ENCODE measurements at regions of chr11 and their contacts with region 1.

Region 1: DNA sequence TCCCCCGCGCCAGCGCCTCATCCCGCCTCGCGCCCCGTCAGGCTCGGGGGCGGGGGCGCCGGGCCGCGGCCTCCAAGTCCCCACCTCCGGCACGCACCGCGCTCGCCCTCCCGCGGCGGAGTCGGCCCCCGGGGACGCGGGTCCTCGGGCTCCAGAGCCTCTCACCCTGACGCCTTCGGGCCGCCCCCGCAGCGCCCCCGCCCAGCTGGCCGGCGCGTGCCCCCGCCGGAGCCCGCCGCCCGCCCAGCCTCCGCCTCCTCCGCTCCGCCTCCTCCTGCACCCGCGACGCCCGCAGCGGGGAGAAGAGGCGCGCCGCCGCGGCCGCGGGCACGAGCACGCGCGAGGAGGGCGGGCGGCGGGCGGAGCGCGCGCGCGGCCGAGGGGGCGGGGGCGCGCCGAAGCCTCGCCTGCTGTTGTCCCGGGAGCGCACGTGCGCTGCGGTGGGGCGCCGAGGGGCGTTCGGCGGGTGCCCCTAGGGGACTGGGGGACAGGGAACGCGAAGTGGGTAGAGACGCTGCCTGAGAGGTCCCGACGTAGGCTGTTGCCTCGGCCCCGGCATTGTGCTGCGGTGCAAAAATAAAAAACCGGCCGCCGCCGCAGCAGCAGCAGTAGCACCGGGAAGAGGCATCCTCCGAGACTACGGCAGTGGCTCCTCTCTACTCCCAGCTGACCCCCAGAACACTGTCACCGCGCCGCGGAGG is 87.4 kb upstream of the ARHGAP32 start:
- DNase-seq: peak; percentile 73
- H3K4me3 Mint-ChIP-seq: peak overlapping the region; percentile 80
- H3K27ac Mint-ChIP-seq: peak overlapping the region; percentile 86
- H3K4me1 Mint-ChIP-seq: peaks cover 38% of the 10 kb centered on the region
- H3K27me3 Mint-ChIP-seq: peaks cover 41% of the 10 kb centered on the region

Region 2: DNA sequence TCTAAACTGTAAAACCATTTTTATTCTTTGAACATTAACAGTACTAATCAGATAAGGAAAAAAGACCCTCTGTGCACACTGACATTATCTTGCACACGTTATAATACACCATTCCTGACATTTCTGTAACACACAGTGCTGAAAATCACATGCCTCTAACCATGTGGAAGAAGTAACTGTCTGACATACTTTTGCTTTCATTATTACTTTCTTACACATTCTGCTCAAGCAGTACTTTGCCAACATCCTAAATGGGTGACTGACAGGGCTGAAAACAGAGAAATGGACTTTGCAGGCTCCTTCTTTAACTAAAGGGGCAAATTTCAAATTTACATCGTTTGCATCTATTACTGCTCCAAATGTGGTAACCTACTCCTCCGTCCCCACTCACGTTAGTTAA is 314.0 kb before region 1 on chr11:
- intact Hi-C with region 1: loop called (anchors 5 kb)
- DNase-seq: no peak
- H3K4me3 Mint-ChIP-seq: peak overlapping the region; percentile 9
- H3K27ac Mint-ChIP-seq: no peak overlapping the region
- H3K4me1 Mint-ChIP-seq: peaks cover 55% of the 10 kb centered on the region
- H3K27me3 Mint-ChIP-seq: peaks cover 1% of the 10 kb centered on the region

Region 3: GRCh38 chr11:129163714-129164164 is 115.7 kb before region 1 on chr11:
- intact Hi-C with region 1: loop called (anchors 5 kb)
- DNase-seq: no peak
- H3K4me3 Mint-ChIP-seq: no peak overlapping the region
- H3K27ac Mint-ChIP-seq: no peak overlapping the region
- H3K4me1 Mint-ChIP-seq: peaks cover 14% of the 10 kb centered on the region
- H3K27me3 Mint-ChIP-seq: peaks cover 16% of the 10 kb centered on the region

Region 4: DNA sequence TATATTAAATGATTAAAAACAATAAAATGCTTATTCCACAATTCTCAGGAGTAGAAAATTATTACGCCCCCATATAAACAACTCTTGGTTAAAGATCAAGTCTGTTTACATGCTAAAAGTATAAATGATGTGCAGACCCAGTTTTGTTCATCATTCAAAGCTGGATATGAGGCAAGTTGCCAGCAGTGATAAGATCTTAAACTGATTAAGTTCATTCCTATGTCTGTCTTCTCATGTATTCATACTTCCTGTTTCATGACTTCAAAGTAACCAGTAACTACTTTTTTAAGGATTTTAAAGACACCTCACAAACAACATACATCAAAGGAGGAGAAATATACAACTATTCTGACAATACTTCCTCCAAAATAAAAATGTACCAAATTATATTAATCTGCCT is 32.3 kb before region 1 on chr11:
- intact Hi-C with region 1: loop called (anchors 2 kb)
- DNase-seq: no peak
- H3K4me3 Mint-ChIP-seq: no peak overlapping the region
- H3K27ac Mint-ChIP-seq: no peak overlapping the region
- H3K4me1 Mint-ChIP-seq: peaks cover 42% of the 10 kb centered on the region
- H3K27me3 Mint-ChIP-seq: no peaks in the 10 kb centered on the region

Measured in activated T-helper 2 cell treated with anti-CD3 and anti-CD28 coated beads, Interferon-gamma antibody, Interleukin-2, Interleukin-4, amounts not matched to agents 10 μg/mL and 5 μg/mL and 100 μg/mL, durations not matched to agents 14 hours and 24 hours and 36 hours (primary cell).